ENCODE measurements at regions of chr14 and their contacts with region 1.

Region 1: DNA sequence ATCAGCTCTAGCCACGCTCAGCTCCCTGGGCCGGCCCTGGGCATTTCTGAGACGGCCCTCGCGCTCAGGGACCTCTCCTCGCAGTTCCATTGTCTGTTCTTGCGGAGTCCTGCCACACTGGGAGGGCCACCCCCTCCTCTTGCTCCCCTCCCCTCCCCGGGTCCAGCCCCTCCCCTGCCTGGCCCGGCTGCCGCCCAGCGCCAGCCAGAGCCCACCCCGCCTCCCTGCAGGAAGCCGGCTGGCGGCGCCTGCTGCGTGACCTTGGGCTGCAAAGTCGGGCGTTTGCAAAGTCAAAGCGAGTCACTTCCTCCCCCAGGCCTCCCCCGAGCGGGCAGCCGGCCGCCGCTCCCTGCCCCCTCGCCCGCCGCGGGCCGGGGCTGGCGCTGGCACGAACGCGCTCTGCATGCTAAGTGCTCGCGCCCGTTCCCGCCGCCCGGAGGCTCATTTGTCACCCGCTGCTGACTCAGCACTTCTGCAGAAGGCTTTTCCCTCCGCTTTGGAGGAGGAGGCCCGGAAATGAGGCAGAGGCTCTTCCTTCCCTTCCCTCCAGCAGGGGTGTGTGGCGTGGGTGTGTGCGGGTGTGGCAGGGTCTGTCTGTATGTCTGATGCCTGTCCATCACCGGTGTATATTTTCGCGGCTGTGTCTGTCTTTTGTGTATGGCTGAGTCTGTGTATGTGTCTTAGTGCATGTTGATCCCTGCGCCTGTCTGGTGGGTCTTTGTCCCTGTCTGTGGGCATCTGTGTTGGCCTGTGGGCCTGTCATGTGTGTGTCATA is 72.0 kb downstream of the IRF2BPL start:
- DNase-seq: peak; percentile 92 to 99
- H3K4me3 ChIP-seq: peak overlapping the region; percentile 48; the same call in 1 of the 2 replicates
- H3K27ac ChIP-seq: peak overlapping the region; percentile 90
- H3K4me1 ChIP-seq: peaks cover 98% of the 10 kb centered on the region
- H3K27me3 ChIP-seq: no peaks in the 10 kb centered on the region
- CTCF ChIP-seq: no peak; the same call in 1 of the 2 replicates

Region 2: GRCh38 chr14:76710056-76711010 is 246.2 kb before region 1 on chr14:
- CTCF ChIA-PET with region 1: no interaction called
- POLR2A ChIA-PET with region 1: no interaction called
- intact Hi-C with region 1: no loop called
- DNase-seq: peak in 1 of 2 experiments; percentile 35
- H3K4me3 ChIP-seq: no peak overlapping the region
- H3K27ac ChIP-seq: no peak overlapping the region
- H3K4me1 ChIP-seq: no peaks in the 10 kb centered on the region
- H3K27me3 ChIP-seq: peaks cover 93% of the 10 kb centered on the region
- CTCF ChIP-seq: peak; percentile 96

Region 3: DNA sequence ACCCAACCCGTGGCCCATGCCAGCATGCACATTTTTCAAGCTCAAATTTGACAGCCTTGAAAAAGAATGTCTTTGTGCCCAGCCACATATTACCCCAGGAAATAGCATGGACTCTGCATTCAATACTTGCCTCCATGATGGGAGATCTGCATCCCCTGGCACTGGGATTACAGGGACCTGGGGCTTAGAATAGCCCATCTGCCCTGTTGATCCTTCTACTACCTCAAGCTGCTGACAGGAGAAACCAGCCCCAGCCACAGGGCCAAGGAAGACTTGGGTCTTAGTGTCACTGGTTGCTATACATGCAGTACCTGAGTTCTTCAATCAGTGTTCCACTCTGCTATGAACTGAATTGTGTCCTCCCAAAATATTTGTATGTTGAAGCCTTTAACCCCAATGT is 45.0 kb before region 1 on chr14:
- CTCF ChIA-PET with region 1: interaction called, 27 read pairs
- POLR2A ChIA-PET with region 1: interaction called, 9 read pairs
- intact Hi-C with region 1: loop called (anchors 1 kb)
- DNase-seq: no peak
- H3K4me3 ChIP-seq: no peak overlapping the region
- H3K27ac ChIP-seq: no peak overlapping the region
- H3K4me1 ChIP-seq: peaks cover 42% of the 10 kb centered on the region
- H3K27me3 ChIP-seq: no peaks in the 10 kb centered on the region
- CTCF ChIP-seq: no peak

Region 4: DNA sequence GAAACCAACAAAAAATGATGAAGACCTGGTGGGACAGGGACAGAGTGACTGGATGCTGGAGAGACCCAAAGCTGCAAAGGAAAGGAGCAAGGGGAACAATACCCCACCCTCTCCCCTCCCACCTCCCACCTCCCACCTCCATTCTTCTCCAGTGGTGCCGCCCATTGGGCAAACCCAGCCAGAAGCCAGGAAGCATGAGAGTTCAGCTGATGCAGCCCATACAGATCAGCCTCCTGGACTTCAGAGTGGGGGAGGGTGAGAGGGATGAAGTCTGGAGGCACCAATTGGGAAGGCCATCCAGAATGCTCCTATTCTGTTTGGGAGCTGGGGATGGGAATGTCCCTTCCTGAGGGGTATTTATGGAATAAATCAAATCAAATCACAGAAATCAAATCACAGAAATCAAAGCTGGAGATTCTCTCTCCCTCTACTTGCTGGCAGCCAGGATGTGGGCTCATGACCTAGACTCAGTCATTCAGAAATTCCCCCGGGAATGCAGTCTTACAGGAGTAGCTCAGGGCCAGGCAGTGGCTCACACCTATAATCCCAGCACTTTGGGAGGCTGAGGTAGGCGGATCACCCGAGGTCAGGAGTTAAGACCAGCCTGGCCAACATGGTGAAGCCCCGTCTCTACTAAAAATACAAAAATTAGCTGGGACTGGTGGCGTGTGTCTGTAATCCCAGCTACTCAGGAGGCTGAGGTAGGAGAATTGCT is 40.9 kb after region 1 on chr14:
- CTCF ChIA-PET with region 1: interaction called, 3 read pairs
- POLR2A ChIA-PET with region 1: interaction called, 20 read pairs
- intact Hi-C with region 1: no loop called
- DNase-seq: peak in 1 of 2 experiments; percentile 62
- H3K4me3 ChIP-seq: no peak overlapping the region
- H3K27ac ChIP-seq: no peak overlapping the region
- H3K4me1 ChIP-seq: peaks cover 22% of the 10 kb centered on the region
- H3K27me3 ChIP-seq: no peaks in the 10 kb centered on the region
- CTCF ChIP-seq: no peak

Region 5: GRCh38 chr14:77023001-77023996 is 66.8 kb after region 1 on chr14:
- CTCF ChIA-PET with region 1: interaction called, 11 read pairs
- POLR2A ChIA-PET with region 1: interaction called, 17 read pairs
- intact Hi-C with region 1: loop called (anchors 1 kb)
- DNase-seq: peak in 1 of 2 experiments; percentile 61
- H3K4me3 ChIP-seq: peak overlapping the region; percentile 64
- H3K27ac ChIP-seq: peak overlapping the region; percentile 17
- H3K4me1 ChIP-seq: peaks cover 40% of the 10 kb centered on the region
- H3K27me3 ChIP-seq: no peaks in the 10 kb centered on the region
- CTCF ChIP-seq: no peak

Region 6: DNA sequence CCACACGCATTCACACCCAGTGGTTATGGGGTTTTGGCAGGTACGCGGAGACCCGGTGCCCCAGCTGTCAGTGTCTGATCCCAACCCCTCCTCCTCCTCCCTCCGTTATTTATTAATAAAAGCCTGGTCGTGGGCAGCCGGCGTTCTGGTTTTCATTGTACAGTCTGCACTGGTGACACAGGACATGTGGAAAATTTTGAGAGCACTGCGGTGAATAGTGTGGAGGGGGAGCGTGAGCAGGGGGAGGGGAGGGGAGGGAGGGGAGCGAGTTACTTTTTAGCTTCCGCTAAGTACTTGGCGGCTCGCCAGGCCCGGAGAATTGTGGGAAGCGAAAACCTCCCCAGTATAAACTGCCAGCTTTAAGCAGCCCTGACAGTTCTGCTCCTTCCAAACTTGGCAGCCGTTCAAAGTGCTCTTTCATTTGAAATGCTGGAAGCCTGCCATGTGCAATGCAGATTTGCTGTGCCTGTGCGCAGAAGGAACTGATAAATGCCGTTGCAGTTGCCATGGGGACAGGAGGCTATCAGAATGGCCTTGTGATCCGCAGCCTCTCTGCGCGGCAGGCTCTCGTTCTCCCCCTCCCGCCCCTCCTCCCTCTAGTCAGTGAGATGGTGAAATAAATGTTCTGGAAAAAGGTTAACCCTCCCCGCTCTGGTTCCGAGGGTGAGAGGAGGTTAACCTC is 83.7 kb after region 1 on chr14:
- CTCF ChIA-PET with region 1: interaction called, 5 read pairs
- POLR2A ChIA-PET with region 1: interaction called, 13 read pairs
- intact Hi-C with region 1: loop called (anchors 1 kb)
- DNase-seq: peak; percentile 99
- H3K4me3 ChIP-seq: peak overlapping the region; percentile 41
- H3K27ac ChIP-seq: peak overlapping the region; percentile 85
- H3K4me1 ChIP-seq: peaks cover 95% of the 10 kb centered on the region
- H3K27me3 ChIP-seq: no peaks in the 10 kb centered on the region
- CTCF ChIP-seq: no peak

Region 7: GRCh38 chr14:77097700-77098528 is 141.4 kb after region 1 on chr14 and contains the start of gene CIPC:
- CTCF ChIA-PET with region 1: interaction called, 6 read pairs
- POLR2A ChIA-PET with region 1: interaction called, 5 read pairs
- intact Hi-C with region 1: loop called (anchors 1 kb)
- DNase-seq: peak; percentile 99 to 100
- H3K4me3 ChIP-seq: peak within 1 kb of the TSS; percentile 83
- H3K27ac ChIP-seq: peak within 1 kb of the TSS; percentile 90
- H3K4me1 ChIP-seq: peaks cover 25% of the 10 kb centered on the region
- H3K27me3 ChIP-seq: no peaks in the 10 kb centered on the region
- CTCF ChIP-seq: no peak; the same call in 1 of the 2 replicates
- total RNA-seq, gene CIPC: 54.7 and 66.3 TPM in 2 replicates

Region 8: GRCh38 chr14:77320238-77320935 is 363.9 kb after region 1 on chr14 and contains the start of gene POMT2:
- CTCF ChIA-PET with region 1: no interaction called
- POLR2A ChIA-PET with region 1: no interaction called
- intact Hi-C with region 1: loop called (anchors 5 kb)
- DNase-seq: peak; percentile 89 to 100
- H3K4me3 ChIP-seq: peak within 1 kb of the TSS; percentile 83
- H3K27ac ChIP-seq: peak within 1 kb of the TSS; percentile 72
- H3K4me1 ChIP-seq: peaks cover 18% of the 10 kb centered on the region
- H3K27me3 ChIP-seq: no peaks in the 10 kb centered on the region
- CTCF ChIP-seq: peak; percentile 76
- total RNA-seq, gene POMT2: 96.5 and 109 TPM in 2 replicates

Measured in PC-9 (cell line).